Activated naive CD4-positive, alpha-beta T cell treated with anti-CD3 and anti-CD28 coated beads for 36 hours (primary cell): ENCODE measurements at regions of chr6 and their contacts with region 1.

Region 1: GRCh38 chr6:70221025-70221714 is 81.7 kb downstream of the COL9A1 start:
- DNase-seq: no peak
- H3K4me3 Mint-ChIP-seq: no peak overlapping the region
- H3K27ac Mint-ChIP-seq: no peak overlapping the region
- H3K4me1 Mint-ChIP-seq: no peaks in the 10 kb centered on the region
- H3K27me3 Mint-ChIP-seq: peaks cover 13% of the 10 kb centered on the region

Region 2: DNA sequence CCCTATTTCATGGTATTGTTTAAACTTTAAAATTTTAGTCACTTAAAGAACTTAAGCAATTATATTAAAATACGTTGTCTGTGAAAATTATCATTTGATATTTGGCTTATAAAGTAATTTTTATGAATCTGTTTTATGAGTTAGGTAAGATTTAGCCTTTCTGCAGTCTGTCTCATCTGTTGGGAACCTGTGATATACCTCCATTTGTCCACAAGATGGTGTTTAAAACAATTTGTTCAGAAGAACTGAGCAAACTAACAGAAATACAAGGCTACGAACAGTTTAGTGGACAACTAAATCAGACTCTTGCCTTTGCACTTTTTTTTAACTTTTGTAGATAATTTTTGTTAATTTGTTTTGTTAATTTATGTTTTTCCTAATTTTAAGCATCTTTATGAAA is 10.7 kb before region 1 on chr6:
- CTCF ChIA-PET with region 1: interaction called, 16 read pairs
- intact Hi-C with region 1: no loop called
- DNase-seq: no peak
- H3K4me3 Mint-ChIP-seq: no peak overlapping the region
- H3K27ac Mint-ChIP-seq: no peak overlapping the region
- H3K4me1 Mint-ChIP-seq: no peaks in the 10 kb centered on the region
- H3K27me3 Mint-ChIP-seq: peaks cover 3% of the 10 kb centered on the region

Region 3: GRCh38 chr6:70231311-70231710 is 10.1 kb after region 1 on chr6:
- CTCF ChIA-PET with region 1: interaction called, 30 read pairs
- intact Hi-C with region 1: no loop called
- DNase-seq: no peak
- H3K4me3 Mint-ChIP-seq: no peak overlapping the region
- H3K27ac Mint-ChIP-seq: no peak overlapping the region
- H3K4me1 Mint-ChIP-seq: no peaks in the 10 kb centered on the region
- H3K27me3 Mint-ChIP-seq: peaks cover 1% of the 10 kb centered on the region

Region 4: GRCh38 chr6:70955441-70956190 is 734.4 kb after region 1 on chr6:
- CTCF ChIA-PET with region 1: interaction called, 4 read pairs
- intact Hi-C with region 1: loop called (anchors 5 kb)
- DNase-seq: peak; percentile 93
- H3K4me3 Mint-ChIP-seq: peak overlapping the region; percentile 74
- H3K27ac Mint-ChIP-seq: no peak overlapping the region
- H3K4me1 Mint-ChIP-seq: peaks cover 4% of the 10 kb centered on the region
- H3K27me3 Mint-ChIP-seq: peaks cover 49% of the 10 kb centered on the region

Region 5: DNA sequence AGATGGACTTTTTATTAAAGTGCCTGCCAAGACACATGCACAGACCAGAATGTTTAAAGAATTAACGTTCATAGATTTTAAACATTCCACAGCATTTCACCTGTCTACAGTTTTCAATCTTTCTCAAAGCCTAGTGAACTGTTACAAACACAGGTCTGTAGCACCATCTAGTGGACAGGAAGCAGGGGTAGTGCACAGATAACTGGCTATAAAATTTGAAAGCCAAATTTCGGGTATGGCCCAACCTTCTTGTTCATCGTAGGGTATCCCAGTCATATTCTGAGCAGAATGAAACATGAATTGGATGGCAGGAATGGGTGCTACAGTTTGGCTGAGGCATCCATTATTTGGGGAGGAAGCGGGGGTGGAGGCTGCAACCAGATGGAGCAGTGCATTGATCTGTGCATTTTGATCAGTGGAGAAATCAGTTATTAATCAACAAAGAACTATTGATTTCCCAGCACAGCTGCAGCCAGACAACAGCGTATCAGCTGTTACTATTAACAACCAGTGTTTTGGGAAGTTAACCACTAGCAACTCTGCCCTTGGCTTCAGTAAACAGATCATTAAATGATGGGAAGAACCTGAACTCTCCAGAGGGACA is 791.8 kb after region 1 on chr6:
- CTCF ChIA-PET with region 1: interaction called, 4 read pairs
- intact Hi-C with region 1: loop called (anchors 1 kb)
- DNase-seq: peak; percentile 17
- H3K4me3 Mint-ChIP-seq: no peak overlapping the region
- H3K27ac Mint-ChIP-seq: no peak overlapping the region
- H3K4me1 Mint-ChIP-seq: no peaks in the 10 kb centered on the region
- H3K27me3 Mint-ChIP-seq: peaks cover 11% of the 10 kb centered on the region